AG04450 (cell line): ENCODE measurements at regions of chr7 and their contacts with region 1.

Region 1: DNA sequence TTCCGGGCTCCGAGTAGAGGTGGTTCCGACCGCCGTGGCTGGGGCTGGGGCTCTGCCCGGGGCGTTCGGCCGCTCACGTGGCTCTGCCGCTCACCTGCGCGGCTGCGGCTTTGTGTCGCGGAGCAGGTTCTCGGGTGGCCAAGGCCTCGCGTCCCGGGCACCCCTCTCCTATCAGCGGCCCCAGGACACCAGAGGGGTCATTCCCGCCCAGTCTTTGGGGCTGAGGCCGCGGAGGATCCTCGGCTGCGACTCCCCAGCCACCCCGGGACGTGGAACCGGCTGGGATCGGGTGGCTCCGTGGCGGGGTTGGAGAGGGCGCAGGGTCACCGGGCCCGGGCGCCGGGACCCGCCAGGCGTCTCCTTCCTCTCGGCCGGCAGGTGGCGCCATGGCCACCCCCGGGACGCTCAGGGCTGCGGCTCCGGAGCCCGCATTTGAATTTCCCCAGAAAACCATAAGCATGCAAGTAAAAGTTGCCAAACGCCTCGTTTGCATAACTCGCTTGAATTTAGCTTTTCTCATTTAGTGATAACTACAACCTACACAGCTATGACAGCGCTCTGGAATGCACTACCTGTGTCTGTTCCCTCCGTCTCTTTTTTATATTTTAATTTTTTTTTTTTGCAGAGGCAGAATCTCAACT is 1.2 kb downstream of the COL26A1 start:
- DNase-seq: peak; percentile 7
- H3K4me3 ChIP-seq: peak overlapping the region; percentile 45
- H3K27ac ChIP-seq: no peak overlapping the region
- H3K27me3 ChIP-seq: peaks cover 22% of the 10 kb centered on the region
- CTCF ChIP-seq: peak; percentile 80

Region 2: GRCh38 chr7:101410743-101411507 is 47.1 kb after region 1 on chr7:
- CTCF ChIA-PET with region 1: interaction called, 14 read pairs
- POLR2A ChIA-PET with region 1: no interaction called
- DNase-seq: no peak
- H3K4me3 ChIP-seq: no peak overlapping the region
- H3K27ac ChIP-seq: no peak overlapping the region
- H3K27me3 ChIP-seq: peaks cover 11% of the 10 kb centered on the region
- CTCF ChIP-seq: peak; percentile 71

Region 3: DNA sequence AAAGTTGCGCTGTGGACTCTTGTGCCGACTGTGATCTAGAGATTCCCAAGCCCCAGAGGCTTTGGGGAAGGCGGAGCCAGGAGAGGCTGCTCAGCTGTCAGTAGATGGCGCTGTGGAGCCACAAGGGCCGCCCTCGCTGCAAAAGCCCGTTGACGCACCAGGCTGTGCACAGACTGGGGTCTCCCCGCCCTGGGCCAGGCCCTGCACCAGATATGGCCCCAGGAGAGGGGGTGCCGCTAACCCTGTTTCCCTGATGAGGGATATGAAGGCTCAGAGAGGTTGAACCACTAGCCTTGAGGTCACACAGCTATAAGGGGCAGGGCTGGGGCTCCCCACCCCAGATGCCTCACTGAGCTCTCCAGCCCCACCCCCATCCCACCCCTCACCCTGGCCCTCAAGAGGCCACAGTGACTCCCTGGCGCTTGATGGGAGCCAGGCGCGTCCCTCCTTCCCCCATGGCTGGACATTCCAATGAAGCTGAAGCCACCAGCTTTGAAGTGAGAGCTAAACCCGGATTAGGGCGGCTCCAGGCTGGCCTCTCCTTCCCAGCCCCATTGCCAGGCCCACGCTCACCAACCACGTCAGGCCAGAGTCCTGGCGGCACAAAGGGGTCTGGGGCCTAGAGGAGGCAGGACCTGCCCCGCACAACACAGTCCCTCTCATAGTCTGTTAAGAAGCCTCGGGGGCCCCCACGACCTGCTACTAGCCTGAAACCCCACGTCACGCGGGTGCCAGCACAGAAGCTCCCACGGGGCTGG is 238.8 kb after region 1 on chr7:
- CTCF ChIA-PET with region 1: no interaction called
- POLR2A ChIA-PET with region 1: no interaction called
- DNase-seq: peak; percentile 26
- H3K4me3 ChIP-seq: no peak overlapping the region
- H3K27ac ChIP-seq: no peak overlapping the region
- H3K27me3 ChIP-seq: peaks cover 4% of the 10 kb centered on the region
- CTCF ChIP-seq: peak; percentile 95